ENCODE measurements at regions of chr9 and their contacts with region 1.

Region 1: DNA sequence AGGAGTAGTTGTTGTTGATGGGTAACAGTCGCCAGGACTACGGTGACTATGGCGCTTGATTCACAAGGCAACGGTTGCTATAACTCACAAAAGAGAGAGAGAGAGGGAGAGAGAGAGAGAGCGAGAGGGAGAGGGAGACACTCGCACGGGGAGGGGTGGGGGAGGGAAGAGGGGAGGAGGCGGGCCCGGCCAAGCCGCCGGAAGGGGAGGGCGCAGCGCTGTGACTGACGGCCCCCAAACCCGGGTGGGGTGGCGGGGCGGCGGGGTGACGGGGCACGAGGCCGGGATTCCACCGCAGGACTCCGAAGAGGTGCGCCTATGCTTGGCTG is at the start of gene RFX3:
- DNase-seq: peak; percentile 92
- H3K4me3 ChIP-seq: peak within 1 kb of the TSS; percentile 95
- H3K27ac ChIP-seq: peak within 1 kb of the TSS; percentile 96
- H3K4me1 ChIP-seq: peaks cover 42% of the 10 kb centered on the region
- CTCF ChIP-seq: no peak
- total RNA-seq, gene RFX3: 6.9 and 11.5 TPM in 2 replicates

Region 2: DNA sequence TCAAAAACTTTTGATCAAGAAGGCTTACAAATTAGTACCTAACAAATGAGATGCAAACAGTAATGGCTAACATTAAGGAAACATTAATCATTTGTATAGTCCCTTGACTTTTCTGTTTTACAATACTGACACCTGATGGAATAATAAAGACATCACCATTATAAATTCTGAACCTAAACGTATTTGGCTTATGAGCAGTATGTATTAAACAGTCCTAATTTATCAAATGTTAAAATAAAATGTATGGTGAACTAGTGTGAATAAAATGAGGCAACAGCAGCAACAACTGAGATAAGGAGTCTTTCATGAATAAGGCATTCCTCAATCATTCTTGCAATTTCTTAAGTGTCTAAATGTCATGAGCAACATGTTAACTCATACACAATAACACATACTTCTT is 687.9 kb before region 1 on chr9:
- CTCF ChIA-PET with region 1: no interaction called
- POLR2A ChIA-PET with region 1: no interaction called
- intact Hi-C with region 1: loop called (anchors 5 kb)
- DNase-seq: no peak
- H3K4me3 ChIP-seq: no peak overlapping the region
- H3K27ac ChIP-seq: no peak overlapping the region
- H3K4me1 ChIP-seq: peaks cover 38% of the 10 kb centered on the region
- CTCF ChIP-seq: peak; percentile 64

Region 3: DNA sequence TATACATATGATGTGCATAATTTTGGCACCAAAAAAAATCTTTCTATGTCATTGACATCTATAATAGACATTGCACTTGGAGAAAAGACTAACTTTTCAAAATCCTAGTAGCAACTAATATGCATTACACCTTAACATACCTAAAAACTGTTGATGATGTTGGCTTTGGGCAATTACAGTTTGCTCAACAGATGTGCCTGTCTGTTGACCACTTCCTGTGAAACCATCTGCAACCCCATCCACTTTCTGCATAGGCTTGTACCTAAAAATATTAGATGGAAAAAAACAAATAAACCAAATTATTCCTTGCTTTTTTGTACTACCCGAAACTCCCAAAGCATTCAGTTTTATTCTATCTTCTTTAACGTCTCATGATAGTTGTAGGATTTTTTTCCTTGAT is 248.6 kb before region 1 on chr9:
- CTCF ChIA-PET with region 1: no interaction called
- POLR2A ChIA-PET with region 1: interaction called, 3 read pairs
- intact Hi-C with region 1: loop called (anchors 5 kb)
- DNase-seq: peak; percentile 84
- H3K4me3 ChIP-seq: peak overlapping the region; percentile 47
- H3K27ac ChIP-seq: peak overlapping the region; percentile 73
- H3K4me1 ChIP-seq: peaks cover 38% of the 10 kb centered on the region
- CTCF ChIP-seq: no peak

Region 4: DNA sequence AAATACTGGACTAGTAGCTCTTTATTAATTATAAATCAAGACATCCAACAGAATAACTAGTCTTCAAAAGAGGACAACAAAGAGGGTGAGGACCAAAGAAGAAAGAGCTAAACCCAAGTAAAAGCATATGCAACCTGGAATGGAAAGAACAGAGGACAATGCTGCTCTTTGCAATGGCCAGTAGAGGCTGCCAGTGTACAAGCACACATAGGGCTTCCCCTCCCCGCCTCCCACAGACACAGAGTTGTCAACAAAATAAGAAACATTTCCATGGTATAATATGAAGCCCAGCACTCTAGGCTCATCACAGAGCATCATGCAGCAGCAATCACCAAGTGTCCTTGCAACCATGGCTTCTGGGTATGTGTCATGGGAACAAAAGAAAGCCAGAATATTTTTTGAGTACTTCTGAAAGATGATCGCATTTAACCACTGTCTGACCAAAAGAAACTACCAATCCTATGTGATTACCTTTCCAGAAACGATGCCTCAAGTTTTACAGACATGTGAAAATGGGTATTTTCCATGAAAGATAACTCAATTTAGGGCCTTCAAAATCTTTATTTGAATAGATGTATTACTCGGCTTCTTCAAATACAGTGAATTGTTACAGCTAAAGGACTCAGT is 58.1 kb before region 1 on chr9:
- CTCF ChIA-PET with region 1: interaction called, 5 read pairs
- POLR2A ChIA-PET with region 1: interaction called, 16 read pairs
- intact Hi-C with region 1: loop called (anchors 2 kb)
- DNase-seq: peak; percentile 81
- H3K4me3 ChIP-seq: no peak overlapping the region
- H3K27ac ChIP-seq: no peak overlapping the region
- H3K4me1 ChIP-seq: peaks cover 8% of the 10 kb centered on the region
- CTCF ChIP-seq: peak; percentile 99

Region 5: DNA sequence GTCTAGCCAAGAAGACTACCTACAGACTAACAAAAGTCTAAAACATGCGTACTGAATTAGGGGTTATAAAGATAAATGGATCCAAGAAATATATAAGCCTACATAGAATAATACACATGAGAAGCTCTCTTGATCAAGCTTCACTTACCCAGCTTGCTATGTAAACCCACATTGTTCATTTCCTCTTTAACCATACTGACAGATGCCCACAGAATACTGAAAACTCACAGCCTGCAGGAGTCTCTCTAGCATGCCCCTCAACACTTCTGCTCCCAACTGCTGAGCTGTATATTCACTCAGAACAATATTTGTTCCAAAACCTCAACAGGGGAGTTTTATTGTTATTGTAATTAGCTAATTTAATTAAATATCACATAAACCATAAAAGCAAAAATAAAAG is 52.4 kb before region 1 on chr9:
- CTCF ChIA-PET with region 1: interaction called, 3 read pairs
- POLR2A ChIA-PET with region 1: interaction called, 52 read pairs
- intact Hi-C with region 1: loop called (anchors 1 kb)
- DNase-seq: peak; percentile 48
- H3K4me3 ChIP-seq: no peak overlapping the region
- H3K27ac ChIP-seq: no peak overlapping the region
- H3K4me1 ChIP-seq: peaks cover 47% of the 10 kb centered on the region
- CTCF ChIP-seq: 0 out of 2 replicates have a peak, but pooled peaks have one; percentile 15

Region 6: GRCh38 chr9:3478549-3478953 is 47.2 kb before region 1 on chr9:
- CTCF ChIA-PET with region 1: interaction called, 3 read pairs
- POLR2A ChIA-PET with region 1: interaction called, 52 read pairs
- intact Hi-C with region 1: loop called (anchors 1 kb)
- DNase-seq: peak; percentile 80
- H3K4me3 ChIP-seq: peak overlapping the region; percentile 42
- H3K27ac ChIP-seq: peak overlapping the region; percentile 78
- H3K4me1 ChIP-seq: peaks cover 62% of the 10 kb centered on the region
- CTCF ChIP-seq: no peak

Region 7: GRCh38 chr9:3508521-3509291 is 17.1 kb before region 1 on chr9:
- CTCF ChIA-PET with region 1: interaction called, 5 read pairs
- POLR2A ChIA-PET with region 1: interaction called, 51 read pairs
- intact Hi-C with region 1: loop called (anchors 1 kb)
- DNase-seq: peak; percentile 51
- H3K4me3 ChIP-seq: peak overlapping the region; percentile 63
- H3K27ac ChIP-seq: peak overlapping the region; percentile 82
- H3K4me1 ChIP-seq: peaks cover 51% of the 10 kb centered on the region
- CTCF ChIP-seq: no peak

Measured in OCI-LY7 (cell line).